ENCODE measurements at regions of chr17 and their contacts with region 1.

Region 1: GRCh38 chr17:78300962-78301822 is 58.7 kb downstream of the SOCS3 start:
- DNase-seq: no peak
- H3K4me3 ChIP-seq: no peak overlapping the region
- H3K27ac ChIP-seq: no peak overlapping the region
- H3K4me1 ChIP-seq: peaks cover 7% of the 10 kb centered on the region; the same call in 1 of the 2 replicates
- H3K27me3 ChIP-seq: no peaks in the 10 kb centered on the region
- CTCF ChIP-seq: no peak

Region 2: DNA sequence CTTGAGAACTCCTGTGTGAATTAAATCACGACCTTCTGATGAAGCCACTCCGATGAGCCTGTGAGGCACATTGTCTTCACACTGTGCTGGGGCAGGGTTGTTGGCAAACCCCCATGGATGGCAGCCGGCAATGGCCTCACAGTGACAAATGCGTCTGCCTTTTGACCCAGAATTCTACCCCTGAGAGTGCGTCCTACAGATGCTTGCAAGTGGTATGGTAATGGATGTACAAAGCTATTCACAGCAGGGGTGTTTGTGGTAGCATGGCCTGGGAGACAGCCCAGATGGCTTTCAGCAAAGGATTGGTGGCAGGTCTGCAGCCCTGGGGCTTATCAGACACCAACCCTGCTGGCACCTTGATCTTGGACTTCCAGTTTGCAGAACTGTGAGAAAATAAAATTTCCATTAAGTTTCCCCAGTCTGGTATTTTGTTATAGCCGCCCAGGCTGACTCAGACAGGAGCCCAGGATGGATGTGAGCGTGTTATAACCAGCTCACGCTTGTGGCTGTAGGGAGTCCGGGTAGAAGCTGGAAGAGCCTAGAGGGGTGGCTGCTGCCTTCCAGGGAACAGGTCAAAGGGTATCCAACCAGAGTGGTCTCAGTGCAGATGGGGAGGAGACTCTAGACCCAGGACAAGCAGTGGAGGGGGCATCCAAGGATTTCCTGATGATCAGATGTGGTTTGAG is 103.9 kb before region 1 on chr17:
- CTCF ChIA-PET with region 1: no interaction called
- POLR2A ChIA-PET with region 1: no interaction called
- intact Hi-C with region 1: no loop called
- DNase-seq: no peak
- H3K4me3 ChIP-seq: no peak overlapping the region
- H3K27ac ChIP-seq: no peak overlapping the region
- H3K4me1 ChIP-seq: no peaks in the 10 kb centered on the region; the same call in 1 of the 2 replicates
- H3K27me3 ChIP-seq: no peaks in the 10 kb centered on the region
- CTCF ChIP-seq: no peak

Region 3: DNA sequence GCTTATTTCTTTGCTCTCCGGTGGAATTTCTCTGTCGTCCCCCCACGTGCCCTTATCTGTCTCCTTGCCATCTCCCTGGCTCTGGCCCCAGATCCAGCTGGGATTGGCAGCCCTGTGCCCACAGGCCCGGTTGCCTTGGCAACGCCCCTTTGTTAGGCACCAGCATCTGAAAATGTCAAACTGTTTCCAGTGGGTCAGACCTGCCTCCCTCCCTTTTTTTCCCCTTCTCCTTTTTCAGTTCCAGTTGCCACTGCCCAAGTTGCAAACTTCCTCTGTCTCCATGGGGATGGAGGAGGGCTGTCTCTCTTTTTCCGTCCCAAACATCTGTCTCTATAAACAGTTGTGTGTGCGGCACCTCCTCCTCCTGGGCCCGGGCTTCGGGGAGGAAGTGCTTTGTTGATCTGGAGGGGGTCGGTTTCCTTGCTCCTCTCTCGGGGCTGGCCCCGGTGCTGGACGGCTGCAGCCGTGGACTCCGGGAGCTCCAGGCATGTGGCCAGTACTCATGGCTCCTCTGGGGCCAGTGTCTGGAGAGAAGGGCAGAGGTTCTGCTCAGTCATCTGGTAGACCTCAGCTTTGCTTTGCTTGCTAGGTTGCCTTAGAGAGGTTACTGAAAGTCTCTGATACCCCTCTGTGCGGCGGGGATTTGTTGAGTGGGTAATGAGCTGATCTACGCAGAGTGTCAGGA is 23.3 kb after region 1 on chr17:
- CTCF ChIA-PET with region 1: interaction called, 12 read pairs
- POLR2A ChIA-PET with region 1: no interaction called
- intact Hi-C with region 1: no loop called
- DNase-seq: no peak
- H3K4me3 ChIP-seq: no peak overlapping the region
- H3K27ac ChIP-seq: no peak overlapping the region
- H3K4me1 ChIP-seq: peaks cover 16% of the 10 kb centered on the region
- H3K27me3 ChIP-seq: no peaks in the 10 kb centered on the region
- CTCF ChIP-seq: no peak

Region 4: GRCh38 chr17:78766743-78767294 is 465.6 kb after region 1 on chr17:
- CTCF ChIA-PET with region 1: no interaction called
- POLR2A ChIA-PET with region 1: interaction called, 11 read pairs
- intact Hi-C with region 1: no loop called
- DNase-seq: no peak
- H3K4me3 ChIP-seq: no peak overlapping the region
- H3K27ac ChIP-seq: no peak overlapping the region
- H3K4me1 ChIP-seq: peaks cover 9% of the 10 kb centered on the region; the same call in 1 of the 2 replicates
- H3K27me3 ChIP-seq: no peaks in the 10 kb centered on the region
- CTCF ChIP-seq: no peak

Measured in PC-9 (cell line).